ENCODE measurements at regions of chr9 and their contacts with region 1.

Region 1: GRCh38 chr9:79477955-79478771 is 93.6 kb upstream of the TLE4 start:
- DNase-seq: no peak
- ATAC-seq: no peak
- H3K4me3 ChIP-seq: no peak overlapping the region
- H3K27ac ChIP-seq: no peak overlapping the region
- H3K4me1 ChIP-seq: no peaks in the 10 kb centered on the region
- H3K27me3 ChIP-seq: no peaks in the 10 kb centered on the region

Region 2: GRCh38 chr9:79817438-79818004 is 339.4 kb after region 1 on chr9:
- intact Hi-C with region 1: no loop called
- DNase-seq: peak in 1 of 2 donors; percentile 54
- ATAC-seq: no peak
- H3K4me3 ChIP-seq: no peak overlapping the region
- H3K27ac ChIP-seq: no peak overlapping the region
- H3K4me1 ChIP-seq: no peaks in the 10 kb centered on the region
- H3K27me3 ChIP-seq: peaks cover 0 to 2% of the 10 kb centered on the region in 2 donors

Region 3: GRCh38 chr9:80175286-80176150 is 697.4 kb after region 1 on chr9:
- intact Hi-C with region 1: loop called in 1 of 2 experiments (anchors 10 kb)
- DNase-seq: no peak
- ATAC-seq: no peak
- H3K4me3 ChIP-seq: no peak overlapping the region
- H3K27ac ChIP-seq: no peak overlapping the region
- H3K4me1 ChIP-seq: no peaks in the 10 kb centered on the region
- H3K27me3 ChIP-seq: no peaks in the 10 kb centered on the region

Measured in aorta (tissue), 5 donors.